ENCODE measurements at regions of chr2 and their contacts with region 1.

Region 1: DNA sequence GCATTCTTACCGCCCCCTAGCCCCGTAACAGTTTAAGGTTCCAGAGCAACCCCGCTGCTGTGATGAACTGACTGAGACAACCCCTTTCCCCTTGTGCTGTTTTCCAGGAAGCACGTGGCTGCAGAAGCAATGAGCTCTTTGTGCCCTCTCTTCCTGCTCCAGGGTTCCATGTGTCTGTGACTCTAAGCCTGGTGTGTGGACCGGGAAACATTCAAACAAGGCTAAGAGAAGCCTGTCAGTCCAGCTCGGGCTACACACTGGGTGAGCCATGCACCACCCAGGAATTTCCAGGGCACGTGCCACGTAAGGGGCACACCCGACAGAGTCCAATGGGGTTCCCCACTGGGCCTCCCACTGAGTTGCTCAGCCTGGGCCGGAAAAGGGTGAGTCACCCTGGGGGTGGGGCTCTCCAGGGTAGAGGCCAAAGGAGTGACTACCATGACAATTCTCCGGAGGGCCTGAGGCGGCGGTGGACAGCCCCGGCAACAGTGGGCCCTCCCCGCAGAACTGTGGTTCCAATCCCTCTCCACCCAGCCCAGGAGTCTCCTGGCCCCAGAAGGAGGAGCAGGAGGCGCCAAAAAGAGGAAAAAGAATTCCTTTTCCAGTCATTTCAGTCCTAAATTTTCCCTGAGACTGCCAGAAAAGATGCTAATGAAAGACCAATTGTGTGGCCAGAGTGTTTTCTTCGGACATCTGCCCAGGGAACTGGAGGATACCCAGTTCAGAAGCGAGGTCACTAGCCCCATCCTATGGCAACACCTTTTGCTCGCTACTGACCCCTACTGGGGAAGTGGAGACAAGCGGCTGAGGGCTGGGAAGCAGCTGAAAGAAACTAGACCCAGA is 157.8 kb upstream of the SLC1A4 start:
- DNase-seq: peak; percentile 85
- H3K4me3 Mint-ChIP-seq: peak overlapping the region; percentile 44
- H3K27ac Mint-ChIP-seq: peak overlapping the region; percentile 59
- H3K4me1 Mint-ChIP-seq: peaks cover 21% of the 10 kb centered on the region
- H3K27me3 Mint-ChIP-seq: peaks cover 7% of the 10 kb centered on the region

Region 2: DNA sequence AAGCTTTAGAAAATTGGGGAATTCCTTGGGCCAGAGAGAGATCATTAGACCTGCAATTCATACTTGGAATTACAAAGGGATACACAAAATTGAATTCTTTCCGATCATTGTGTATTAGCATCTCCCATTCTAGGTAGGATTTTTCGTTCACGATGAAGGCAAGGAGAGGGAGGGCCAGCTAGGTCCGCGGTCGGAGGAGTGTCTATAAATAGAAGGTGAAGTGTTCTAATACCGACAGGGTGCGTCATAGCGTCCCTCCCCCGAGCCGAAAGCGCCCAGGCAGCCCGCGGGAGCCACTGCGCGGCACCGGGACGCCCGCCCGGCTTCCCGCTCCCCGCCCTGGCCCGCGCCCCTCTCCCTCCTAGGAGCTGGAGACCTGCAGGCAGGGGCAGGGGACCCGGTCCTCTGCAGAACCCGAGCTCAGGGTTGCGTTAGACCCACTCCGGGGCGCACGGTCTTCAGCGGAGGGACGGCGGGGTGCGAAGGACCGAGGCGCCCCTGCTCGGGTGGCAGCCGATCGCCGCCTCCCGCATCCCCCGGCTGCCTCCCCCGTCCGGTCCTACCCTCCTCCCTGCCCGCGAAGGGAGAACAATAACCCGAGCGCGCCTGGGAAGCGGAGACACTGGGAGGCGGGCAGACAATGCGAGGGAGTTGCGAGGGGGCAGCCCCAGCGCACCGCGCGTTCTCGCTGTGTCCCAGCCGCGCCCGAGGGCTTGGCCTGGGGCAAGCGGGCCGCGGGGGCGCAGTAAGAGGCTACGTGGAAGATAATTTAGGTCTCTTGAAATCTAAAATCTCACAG is 63.5 kb before region 1 on chr2:
- CTCF ChIA-PET with region 1: interaction called, 5 read pairs
- POLR2A ChIA-PET with region 1: interaction called, 10 read pairs
- DNase-seq: peak; percentile 84
- H3K4me3 Mint-ChIP-seq: peak overlapping the region; percentile 80
- H3K27ac Mint-ChIP-seq: peak overlapping the region; percentile 79
- H3K4me1 Mint-ChIP-seq: peaks cover 23% of the 10 kb centered on the region
- H3K27me3 Mint-ChIP-seq: peaks cover 15% of the 10 kb centered on the region

Region 3: DNA sequence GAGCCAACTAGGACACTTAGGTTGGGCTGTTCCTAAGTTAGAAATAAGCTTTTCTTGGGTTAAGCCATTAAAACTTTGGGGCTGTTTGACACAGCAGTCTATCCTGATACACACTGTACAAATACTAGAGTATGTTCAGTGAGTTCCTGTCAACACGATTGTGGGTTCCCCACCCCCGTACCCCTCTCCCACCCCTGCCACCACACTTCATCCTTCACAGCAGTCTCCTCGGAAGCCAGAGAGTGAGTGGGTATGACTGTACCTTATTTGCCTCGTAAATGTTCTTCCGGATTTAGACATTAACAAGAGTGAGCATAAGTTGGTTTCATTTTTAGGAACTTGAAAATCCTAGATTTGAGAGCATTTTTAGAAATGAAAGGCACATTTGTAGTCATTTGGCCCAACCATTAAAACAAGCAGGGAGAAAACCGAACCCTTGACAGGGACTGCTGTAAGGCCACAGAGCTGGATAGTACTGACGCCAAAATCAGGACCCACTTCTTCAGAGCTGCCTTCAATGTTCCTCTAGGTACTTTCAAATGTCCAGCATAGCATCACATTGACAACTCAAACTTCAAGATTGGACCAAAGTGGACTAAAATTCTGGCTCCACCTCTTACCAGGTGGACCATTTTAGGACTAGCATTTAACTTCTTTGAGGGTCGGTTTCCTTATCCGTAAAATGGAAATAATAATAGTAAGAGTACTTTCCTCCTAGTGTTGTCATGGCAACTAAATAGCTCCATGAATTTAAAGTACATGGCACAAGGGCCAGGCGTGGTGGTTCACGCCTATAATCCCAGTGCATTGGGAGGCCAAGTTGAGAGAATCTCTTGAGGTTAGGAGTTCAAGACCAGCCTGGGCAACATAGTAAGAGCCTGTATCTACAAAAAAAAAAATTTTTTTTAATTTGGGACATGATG is 11.3 kb before region 1 on chr2:
- CTCF ChIA-PET with region 1: interaction called, 29 read pairs
- POLR2A ChIA-PET with region 1: interaction called, 5 read pairs
- DNase-seq: peak; percentile 63
- H3K4me3 Mint-ChIP-seq: peak overlapping the region; percentile 21
- H3K27ac Mint-ChIP-seq: peak overlapping the region; percentile 89
- H3K4me1 Mint-ChIP-seq: peaks cover 25% of the 10 kb centered on the region
- H3K27me3 Mint-ChIP-seq: no peaks in the 10 kb centered on the region

Region 4: GRCh38 chr2:65016789-65017188 is 185.4 kb after region 1 on chr2:
- CTCF ChIA-PET with region 1: no interaction called
- POLR2A ChIA-PET with region 1: no interaction called
- DNase-seq: no peak
- H3K4me3 Mint-ChIP-seq: no peak overlapping the region
- H3K27ac Mint-ChIP-seq: no peak overlapping the region
- H3K4me1 Mint-ChIP-seq: peaks cover 5% of the 10 kb centered on the region
- H3K27me3 Mint-ChIP-seq: no peaks in the 10 kb centered on the region

Measured in activated CD4-positive, alpha-beta memory T cell treated with anti-CD3 and anti-CD28 coated beads, Interleukin-2, amount 10 ng/mL, durations not matched to agents 7 days and 5 days (primary cell).